ENCODE measurements at regions of chr17 and their contacts with region 1.

Region 1: GRCh38 chr17:32909787-32910369 is 18.1 kb upstream of the TMEM98 start:
- DNase-seq: peak; percentile 88 to 90
- H3K4me3 ChIP-seq: no peak overlapping the region
- H3K4me3 Mint-ChIP-seq: no peak overlapping the region
- H3K27ac Mint-ChIP-seq: no peak overlapping the region
- H3K4me1 ChIP-seq: peaks cover 37% of the 10 kb centered on the region
- H3K4me1 Mint-ChIP-seq: peaks cover 19% of the 10 kb centered on the region
- H3K27me3 ChIP-seq: no peaks in the 10 kb centered on the region
- H3K27me3 Mint-ChIP-seq: no peaks in the 10 kb centered on the region
- CTCF ChIP-seq: peak; percentile 84

Region 2: GRCh38 chr17:32671896-32672295 is 238.0 kb before region 1 on chr17:
- CTCF ChIA-PET with region 1: no interaction called
- POLR2A ChIA-PET with region 1: no interaction called
- intact Hi-C with region 1: loop called (anchors 10 kb)
- DNase-seq: no peak
- H3K4me3 ChIP-seq: no peak overlapping the region
- H3K4me3 Mint-ChIP-seq: no peak overlapping the region
- H3K27ac Mint-ChIP-seq: no peak overlapping the region
- H3K4me1 ChIP-seq: no peaks in the 10 kb centered on the region
- H3K4me1 Mint-ChIP-seq: no peaks in the 10 kb centered on the region
- H3K27me3 ChIP-seq: no peaks in the 10 kb centered on the region
- H3K27me3 Mint-ChIP-seq: no peaks in the 10 kb centered on the region
- CTCF ChIP-seq: no peak

Region 3: DNA sequence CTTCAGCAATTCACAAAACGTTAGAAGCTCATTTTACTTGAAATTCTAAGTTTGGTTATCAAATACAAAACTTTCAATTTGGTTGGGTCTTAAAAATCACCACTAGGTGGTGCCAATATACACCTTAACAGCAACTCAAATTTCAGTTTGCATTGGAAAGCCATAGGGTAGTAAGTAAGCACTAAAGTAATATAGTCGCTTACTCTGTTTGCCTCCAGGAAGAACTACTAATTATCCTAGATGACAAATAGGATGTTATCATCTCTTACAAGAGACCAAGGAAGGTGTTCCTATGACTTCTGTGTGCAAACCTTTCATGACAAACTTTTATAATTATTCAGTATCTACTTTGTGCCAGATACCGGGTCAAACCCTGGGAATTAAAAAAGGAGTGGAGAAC is 126.3 kb before region 1 on chr17:
- CTCF ChIA-PET with region 1: interaction called, 14 read pairs
- POLR2A ChIA-PET with region 1: no interaction called
- intact Hi-C with region 1: loop called (anchors 1 kb)
- DNase-seq: peak in 1 of 2 experiments; percentile 53
- H3K4me3 ChIP-seq: no peak overlapping the region
- H3K4me3 Mint-ChIP-seq: no peak overlapping the region
- H3K27ac Mint-ChIP-seq: peak overlapping the region; percentile 68
- H3K4me1 ChIP-seq: peaks cover 13% of the 10 kb centered on the region
- H3K4me1 Mint-ChIP-seq: peaks cover 21% of the 10 kb centered on the region
- H3K27me3 ChIP-seq: no peaks in the 10 kb centered on the region
- H3K27me3 Mint-ChIP-seq: no peaks in the 10 kb centered on the region
- CTCF ChIP-seq: peak; percentile 64 to 82

Region 4: GRCh38 chr17:32921017-32921416 is 11.1 kb after region 1 on chr17:
- CTCF ChIA-PET with region 1: interaction called, 10 read pairs
- POLR2A ChIA-PET with region 1: no interaction called
- intact Hi-C with region 1: loop called (anchors 2 kb)
- DNase-seq: no peak
- H3K4me3 ChIP-seq: no peak overlapping the region
- H3K4me3 Mint-ChIP-seq: no peak overlapping the region
- H3K27ac Mint-ChIP-seq: no peak overlapping the region
- H3K4me1 ChIP-seq: no peaks in the 10 kb centered on the region
- H3K4me1 Mint-ChIP-seq: no peaks in the 10 kb centered on the region
- H3K27me3 ChIP-seq: no peaks in the 10 kb centered on the region
- H3K27me3 Mint-ChIP-seq: no peaks in the 10 kb centered on the region
- CTCF ChIP-seq: no peak

Region 5: GRCh38 chr17:32927724-32928585 is 18.1 kb after region 1 on chr17 and contains the start of gene TMEM98:
- CTCF ChIA-PET with region 1: interaction called, 8 read pairs
- POLR2A ChIA-PET with region 1: no interaction called
- intact Hi-C with region 1: loop called (anchors 2 kb)
- DNase-seq: peak in 1 of 2 experiments; percentile 82
- H3K4me3 ChIP-seq: peak within 1 kb of the TSS; percentile 77
- H3K4me3 Mint-ChIP-seq: no peak within 1 kb of the TSS
- H3K27ac Mint-ChIP-seq: peak within 1 kb of the TSS; percentile 65
- H3K4me1 ChIP-seq: peaks cover 23% of the 10 kb centered on the region
- H3K4me1 Mint-ChIP-seq: no peaks in the 10 kb centered on the region
- H3K27me3 ChIP-seq: no peaks in the 10 kb centered on the region
- H3K27me3 Mint-ChIP-seq: no peaks in the 10 kb centered on the region
- CTCF ChIP-seq: no peak
- total RNA-seq, gene TMEM98: 189 and 229 TPM in 2 replicates